AG04450 (cell line): ENCODE measurements at regions of chr22 and their contacts with region 1.

Region 1: GRCh38 chr22:17954321-17955197 is 69.8 kb downstream of the MICAL3 start:
- DNase-seq: no peak
- H3K4me3 ChIP-seq: no peak overlapping the region
- H3K27ac ChIP-seq: no peak overlapping the region
- H3K27me3 ChIP-seq: no peaks in the 10 kb centered on the region
- CTCF ChIP-seq: no peak

Region 2: DNA sequence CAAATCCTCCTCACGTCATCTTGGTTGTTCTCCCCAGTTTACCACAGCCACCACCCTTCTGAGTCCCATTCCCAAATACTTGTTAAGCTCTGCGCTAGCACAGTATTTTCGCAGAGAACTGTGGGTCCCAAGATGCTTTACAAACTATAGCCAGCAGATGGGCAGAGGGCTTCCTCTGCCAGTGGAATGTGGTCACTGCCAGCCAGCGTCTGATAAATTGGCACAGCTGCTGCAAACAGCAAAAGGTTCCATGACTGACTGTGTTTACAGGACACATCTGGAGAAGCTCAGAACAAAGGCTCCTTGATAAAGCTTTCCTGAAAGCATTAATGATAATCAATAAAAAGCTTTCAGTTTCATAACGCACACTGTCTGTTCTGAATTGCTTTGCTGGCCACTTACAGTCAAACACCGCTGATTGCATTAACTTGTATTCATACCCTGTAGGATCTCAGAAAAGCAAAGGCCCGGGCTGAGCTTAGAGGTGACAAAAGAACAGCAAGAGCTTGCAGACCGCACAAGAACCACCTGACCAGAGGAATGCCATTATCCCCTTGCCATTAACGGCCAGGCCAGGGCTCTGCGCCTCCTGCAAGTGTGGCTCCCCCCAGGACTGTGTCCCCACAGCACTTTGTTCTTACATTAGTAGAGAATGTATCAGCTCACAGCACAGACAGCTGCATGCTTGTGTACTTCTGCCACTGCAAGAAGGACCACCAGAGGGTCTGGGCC is 50.8 kb before region 1 on chr22:
- CTCF ChIA-PET with region 1: no interaction called
- POLR2A ChIA-PET with region 1: interaction called, 12 read pairs
- DNase-seq: no peak
- H3K4me3 ChIP-seq: no peak overlapping the region
- H3K27ac ChIP-seq: no peak overlapping the region
- H3K27me3 ChIP-seq: no peaks in the 10 kb centered on the region
- CTCF ChIP-seq: no peak